ENCODE measurements at regions of chr22 and their contacts with region 1.

Region 1: DNA sequence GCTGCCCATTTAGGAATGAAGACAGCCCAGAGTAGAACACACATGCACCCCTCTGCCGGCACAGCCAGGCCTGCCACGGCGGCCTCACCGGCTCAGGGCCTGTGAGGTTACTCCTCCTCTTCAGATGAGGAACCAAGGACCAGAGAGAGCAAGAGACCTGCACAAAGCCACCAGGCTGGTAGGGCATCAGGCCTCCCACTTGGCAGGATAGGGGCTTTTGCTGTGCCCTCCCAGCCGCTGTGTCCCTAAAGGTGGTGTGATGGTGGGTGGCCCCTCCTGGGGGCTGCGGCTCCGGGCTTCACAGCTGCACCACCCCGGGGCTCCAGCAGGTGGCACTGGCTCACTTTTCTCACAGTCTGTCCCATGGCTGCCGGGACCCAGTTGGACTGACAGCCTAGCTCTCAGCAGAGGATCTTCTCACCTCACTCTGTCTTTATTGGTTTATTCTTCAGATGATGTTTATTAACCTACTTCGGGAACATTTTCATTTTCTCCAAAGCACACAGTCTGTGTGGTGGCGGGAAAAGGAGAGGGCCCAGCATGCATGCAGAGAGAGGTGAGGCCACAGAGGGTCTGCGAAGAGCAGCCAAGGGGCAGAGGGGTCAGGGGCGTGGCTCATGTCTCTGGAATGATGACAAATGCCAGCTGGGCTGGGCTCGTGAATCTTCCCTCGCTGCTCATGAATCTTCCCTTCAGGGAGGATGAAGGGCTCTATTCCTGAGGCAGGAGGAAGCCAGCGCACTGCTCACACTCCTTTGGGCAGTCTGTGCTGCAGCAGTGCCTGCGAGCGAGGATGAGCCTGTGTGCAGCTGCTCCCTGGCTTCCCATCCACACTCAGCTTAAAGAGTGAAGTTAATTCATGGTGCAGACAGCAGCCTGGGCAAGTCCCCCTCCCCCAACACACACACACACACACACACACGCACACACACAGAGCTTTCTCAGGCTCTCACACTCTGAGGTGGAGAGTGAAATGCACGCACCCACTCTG is 101.1 kb upstream of the PITPNB start:
- DNase-seq: peak; percentile 84
- ATAC-seq: peak; percentile 73

Region 2: DNA sequence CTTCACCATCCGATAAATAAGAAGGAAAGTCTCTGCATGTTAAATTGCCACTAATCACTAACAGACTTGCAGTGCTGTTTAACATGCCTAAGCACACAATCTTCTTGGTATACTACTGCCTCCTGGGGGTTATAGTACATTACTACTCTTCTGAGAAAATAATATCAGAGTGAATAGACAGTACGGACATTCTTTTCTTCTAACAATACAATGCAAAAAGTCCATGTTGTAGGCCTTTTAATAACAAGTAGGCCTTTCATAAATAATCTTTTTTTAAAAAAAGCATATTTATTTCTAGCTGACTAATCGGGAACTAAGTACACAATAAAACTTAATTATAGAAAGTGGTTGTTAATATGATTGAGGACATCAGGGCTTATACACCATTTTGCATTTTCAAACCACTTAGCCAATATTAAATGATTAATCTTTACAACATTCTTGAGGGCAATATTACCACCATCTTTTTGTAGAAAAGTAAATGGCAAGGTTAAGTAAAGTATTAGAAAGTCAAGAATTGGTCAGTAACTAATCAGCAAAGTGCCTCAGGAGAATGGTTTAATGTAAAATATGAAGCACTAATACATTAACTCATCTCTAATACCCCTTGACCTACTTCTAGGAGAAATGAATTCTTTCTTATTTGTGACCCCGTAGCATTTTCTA is 574.8 kb after region 1 on chr22:
- intact Hi-C with region 1: loop called (anchors 2 kb)
- DNase-seq: no peak
- ATAC-seq: peak; percentile 96

Measured in Right ventricle myocardium superior (tissue), 1 donor.